A549 (cell line): ENCODE measurements at regions of chr1 and their contacts with region 1.

Region 1: DNA sequence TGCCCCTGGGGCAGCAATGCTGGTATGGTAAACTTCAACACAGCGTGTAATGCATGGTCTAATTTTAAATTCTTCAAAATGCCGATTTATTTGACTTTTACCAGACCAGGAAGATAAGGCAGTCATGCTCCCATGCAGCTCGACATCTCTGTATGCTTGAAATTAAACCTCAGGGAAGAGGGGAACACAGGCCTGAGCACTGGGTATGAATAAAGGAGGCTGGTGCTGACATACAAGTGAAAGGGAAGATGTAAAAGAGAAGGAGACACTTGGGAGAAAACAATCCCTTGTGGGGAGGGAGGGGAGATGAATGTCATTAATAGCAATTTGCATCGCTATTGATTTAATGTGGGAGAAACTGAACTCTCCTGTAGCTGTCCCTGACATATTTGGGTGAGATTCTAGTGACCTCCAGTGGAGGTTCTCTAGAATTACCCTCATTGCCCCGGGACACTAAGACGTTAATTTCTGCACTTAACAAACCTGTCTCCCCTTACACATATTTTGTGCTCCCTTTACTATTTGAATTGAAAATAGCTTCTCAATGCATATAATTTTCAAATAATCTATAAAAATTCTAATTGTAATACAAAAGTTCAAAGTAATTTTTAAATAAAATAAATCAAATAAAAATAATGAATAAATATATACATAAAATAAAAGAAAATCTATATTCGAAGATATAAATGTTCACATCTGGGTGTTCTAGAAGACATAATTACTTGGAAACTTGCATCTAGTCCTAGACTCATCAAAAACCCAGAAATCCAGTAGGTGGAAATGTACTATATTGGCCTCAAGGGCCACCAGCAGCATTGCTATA is 283.1 kb downstream of the LMX1A start:
- DNase-seq: peak; percentile 37 to 59
- ATAC-seq: peak in 1 of 2 experiments; percentile 87; a peak in 4 of 6 replicates
- H3K4me3 ChIP-seq: no peak overlapping the region
- H3K27ac ChIP-seq: peak overlapping the region in 1 of 2 experiments; percentile 57; a peak in 3 of 6 replicates
- H3K4me1 ChIP-seq: peaks cover 5% of the 10 kb centered on the region; the same call in 1 of the 3 replicates
- CTCF ChIP-seq: peak; percentile 89
- EP300 ChIP-seq: no peak
- POLR2A ChIP-seq: no peak
- RAD21 ChIP-seq: peak; percentile 87 to 92

Region 2: DNA sequence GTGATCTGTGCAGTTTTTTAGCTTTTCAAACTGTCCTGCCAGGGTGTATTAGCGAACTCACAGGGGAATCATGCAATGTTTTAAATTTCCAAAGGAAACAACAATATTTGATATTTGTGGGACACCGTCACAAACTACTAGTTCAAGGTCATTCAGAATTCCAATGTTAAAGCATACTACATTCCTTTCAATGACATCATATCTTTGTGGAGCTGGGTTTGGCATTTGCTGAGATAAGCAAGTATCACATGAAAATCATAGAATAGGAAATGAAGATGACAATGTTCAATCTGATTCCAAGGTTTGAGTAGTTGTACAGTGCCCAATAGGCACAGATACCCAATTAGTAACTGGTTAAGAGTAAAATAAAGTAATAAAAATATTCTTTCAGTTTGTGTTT is 1716.0 kb before region 1 on chr1:
- CTCF ChIA-PET with region 1: interaction called, 13 read pairs
- POLR2A ChIA-PET with region 1: no interaction called
- DNase-seq: no peak
- ATAC-seq: no peak
- H3K4me3 ChIP-seq: no peak overlapping the region
- H3K27ac ChIP-seq: no peak overlapping the region
- H3K4me1 ChIP-seq: no peaks in the 10 kb centered on the region
- CTCF ChIP-seq: no peak
- EP300 ChIP-seq: no peak
- POLR2A ChIP-seq: no peak
- RAD21 ChIP-seq: no peak

Region 3: DNA sequence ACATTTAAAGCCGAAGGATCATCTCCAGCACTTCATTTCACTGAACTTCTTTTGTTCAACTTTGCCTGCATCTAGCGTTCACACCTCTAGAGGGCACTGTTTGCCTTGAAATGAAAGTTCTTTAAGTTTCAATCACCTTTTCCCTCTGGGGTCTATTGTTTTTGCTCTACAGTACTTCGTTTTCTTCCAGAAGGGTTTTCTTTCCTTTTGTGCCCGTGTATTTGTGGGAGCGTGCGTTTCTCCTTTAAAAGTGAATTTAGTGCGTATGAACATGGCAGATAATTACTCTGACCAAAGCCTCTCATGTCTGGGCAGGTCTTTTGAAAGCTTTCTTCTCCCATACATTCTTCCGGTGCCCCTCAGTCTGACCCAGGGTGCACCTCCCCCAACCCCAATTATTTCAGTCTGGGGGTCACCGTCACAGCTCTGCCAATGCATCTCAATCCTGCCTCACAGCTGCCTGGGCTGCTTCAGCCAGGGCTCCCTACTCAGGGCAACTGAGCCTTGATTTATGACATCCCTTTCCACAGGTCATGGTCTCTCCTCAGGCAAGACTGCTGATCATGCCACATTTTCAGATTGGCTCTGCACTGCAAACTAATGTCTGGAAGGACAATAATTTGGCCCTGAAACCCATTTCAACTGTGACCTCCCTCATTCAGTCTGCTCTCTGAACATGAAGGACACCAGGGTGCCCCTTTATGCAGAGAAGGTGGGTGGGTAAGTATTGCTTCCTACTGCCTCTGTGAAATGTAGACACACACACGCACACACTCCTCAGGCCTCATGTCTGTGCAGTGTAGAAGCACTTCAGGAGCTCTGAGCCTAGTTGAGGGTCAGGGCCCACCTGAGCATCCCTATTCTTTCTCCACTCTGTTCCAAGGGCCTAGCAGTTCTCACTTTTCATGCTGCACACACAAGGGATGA is 1663.1 kb before region 1 on chr1:
- CTCF ChIA-PET with region 1: interaction called, 13 read pairs
- POLR2A ChIA-PET with region 1: no interaction called
- DNase-seq: peak; percentile 18 to 64
- ATAC-seq: peak in 1 of 2 experiments; percentile 67; a peak in 3 of 6 replicates
- H3K4me3 ChIP-seq: 0 out of 3 replicates have a peak overlapping the region, but pooled peaks have one; percentile 15
- H3K27ac ChIP-seq: 0 out of 6 replicates have a peak overlapping the region, but pooled peaks of 1 of the 2 experiments have one; percentile 13
- H3K4me1 ChIP-seq: no peaks in the 10 kb centered on the region
- CTCF ChIP-seq: peak; percentile 89
- EP300 ChIP-seq: no peak
- POLR2A ChIP-seq: no peak
- RAD21 ChIP-seq: peak; percentile 84

Region 4: GRCh38 chr1:165063181-165063965 is 10.0 kb before region 1 on chr1:
- CTCF ChIA-PET with region 1: interaction called, 16 read pairs
- POLR2A ChIA-PET with region 1: no interaction called
- DNase-seq: no peak
- ATAC-seq: no peak
- H3K4me3 ChIP-seq: no peak overlapping the region
- H3K27ac ChIP-seq: no peak overlapping the region
- H3K4me1 ChIP-seq: no peaks in the 10 kb centered on the region
- CTCF ChIP-seq: no peak
- EP300 ChIP-seq: no peak
- POLR2A ChIP-seq: no peak
- RAD21 ChIP-seq: no peak

Region 5: DNA sequence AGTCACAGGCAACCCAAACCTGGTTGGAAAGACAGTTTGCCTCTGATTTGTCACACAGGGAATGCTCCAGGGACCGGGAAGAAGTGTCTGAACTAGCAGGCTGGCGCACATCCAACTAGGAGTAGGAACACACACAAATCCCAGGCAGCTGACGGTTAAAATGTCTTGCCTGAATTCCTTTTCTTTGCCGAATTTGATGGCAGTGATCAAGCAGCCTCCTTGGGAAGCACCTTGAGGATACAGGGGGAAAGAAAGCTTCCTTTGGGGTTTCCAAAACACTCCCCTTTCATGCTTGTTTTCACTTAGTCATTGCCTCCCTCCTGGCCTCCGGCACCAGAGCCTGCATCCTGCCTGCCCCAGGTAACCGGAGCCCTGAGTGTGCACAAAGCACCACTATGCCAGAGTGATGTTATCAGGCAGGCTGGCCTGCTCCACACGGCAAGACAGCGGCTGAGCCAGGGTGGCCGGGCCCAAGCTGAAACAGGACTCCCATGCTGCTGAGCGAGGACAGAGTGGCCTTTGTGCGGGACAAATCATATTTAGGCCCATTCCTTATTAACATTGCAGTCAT is 89.4 kb after region 1 on chr1:
- CTCF ChIA-PET with region 1: no interaction called
- POLR2A ChIA-PET with region 1: no interaction called
- DNase-seq: no peak
- ATAC-seq: no peak
- H3K4me3 ChIP-seq: no peak overlapping the region
- H3K27ac ChIP-seq: no peak overlapping the region
- H3K4me1 ChIP-seq: no peaks in the 10 kb centered on the region
- CTCF ChIP-seq: no peak
- EP300 ChIP-seq: no peak
- POLR2A ChIP-seq: no peak
- RAD21 ChIP-seq: no peak